Thyroid gland (tissue), 4 donors: ENCODE measurements at regions of chr12 and their contacts with region 1.

Region 1: GRCh38 chr12:14260011-14260993 is 105.2 kb upstream of the ATF7IP start:
- DNase-seq: peak; percentile 97 to 98
- H3K4me3 ChIP-seq: no peak overlapping the region
- H3K27ac ChIP-seq: peak overlapping the region; percentile 91 to 92 (median 92)
- H3K4me1 ChIP-seq: peaks cover 20 to 43% of the 10 kb centered on the region in 2 donors
- H3K27me3 ChIP-seq: no peaks in the 10 kb centered on the region
- CTCF ChIP-seq: no peak
- POLR2A ChIP-seq: peak in 1 of 2 donors; percentile 57

Region 2: DNA sequence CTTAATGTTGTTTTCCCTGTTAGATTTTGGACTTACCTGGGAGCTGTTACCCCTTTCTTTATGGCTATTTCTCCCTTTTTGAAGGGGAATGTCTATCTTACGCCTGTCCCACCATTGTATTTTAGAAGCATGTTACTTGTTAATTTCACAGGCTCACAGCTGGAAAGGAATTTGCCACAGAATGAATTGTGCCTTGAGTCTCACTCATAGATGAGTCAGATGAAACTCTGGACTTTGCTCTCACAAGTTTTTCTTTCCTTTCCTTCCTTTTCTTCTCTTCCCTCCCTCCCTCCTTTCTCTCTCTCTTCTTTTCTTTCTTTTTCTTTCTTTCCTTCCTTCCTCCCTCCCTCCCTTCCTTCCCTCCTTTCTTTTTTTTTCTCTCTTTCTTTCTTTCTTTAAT is 95.8 kb after region 1 on chr12:
- intact Hi-C with region 1: loop called (anchors 10 kb)
- DNase-seq: no peak
- H3K4me3 ChIP-seq: no peak overlapping the region
- H3K27ac ChIP-seq: no peak overlapping the region
- H3K4me1 ChIP-seq: peaks cover 13 to 24% of the 10 kb centered on the region in 2 donors
- H3K27me3 ChIP-seq: no peaks in the 10 kb centered on the region
- CTCF ChIP-seq: no peak
- POLR2A ChIP-seq: no peak